PC-9 (cell line): ENCODE measurements at regions of chrX and their contacts with region 1.

Region 1: GRCh38 chrX:8632924-8633323 is 99.0 kb downstream of the ANOS1 start:
- DNase-seq: no peak
- H3K4me3 ChIP-seq: no peak overlapping the region
- H3K27ac ChIP-seq: no peak overlapping the region
- H3K4me1 ChIP-seq: peaks cover 14% of the 10 kb centered on the region
- H3K27me3 ChIP-seq: no peaks in the 10 kb centered on the region
- CTCF ChIP-seq: no peak

Region 2: GRCh38 chrX:7233580-7234406 is 1399.1 kb before region 1 on chrX:
- CTCF ChIA-PET with region 1: no interaction called
- POLR2A ChIA-PET with region 1: no interaction called
- intact Hi-C with region 1: no loop called
- DNase-seq: no peak
- H3K4me3 ChIP-seq: no peak overlapping the region
- H3K27ac ChIP-seq: no peak overlapping the region
- H3K4me1 ChIP-seq: 0 out of 2 replicates have a peak, but pooled peaks cover 11% of the 10 kb centered on the region
- H3K27me3 ChIP-seq: no peaks in the 10 kb centered on the region
- CTCF ChIP-seq: no peak

Region 3: DNA sequence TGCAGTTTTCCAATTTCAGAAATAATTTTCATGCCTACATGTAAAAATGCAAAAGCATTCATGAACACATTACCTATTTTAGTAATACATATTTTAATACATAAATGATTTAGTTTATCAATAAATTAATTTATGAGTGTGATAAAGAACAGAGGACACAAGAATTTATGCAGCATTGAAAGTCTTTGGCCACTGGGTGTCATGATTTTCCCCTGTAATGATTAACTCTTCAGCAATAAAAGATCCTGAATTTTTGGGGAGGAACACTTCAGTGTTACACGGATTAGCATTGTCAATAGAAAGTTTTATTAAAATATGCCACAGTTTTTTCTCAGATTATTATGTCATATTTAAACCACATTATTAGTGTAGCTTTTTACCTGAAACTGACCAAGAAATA is 453.3 kb before region 1 on chrX:
- CTCF ChIA-PET with region 1: no interaction called
- POLR2A ChIA-PET with region 1: no interaction called
- intact Hi-C with region 1: loop called (anchors 10 kb)
- DNase-seq: no peak
- H3K4me3 ChIP-seq: no peak overlapping the region
- H3K27ac ChIP-seq: no peak overlapping the region
- H3K4me1 ChIP-seq: no peaks in the 10 kb centered on the region
- H3K27me3 ChIP-seq: no peaks in the 10 kb centered on the region
- CTCF ChIP-seq: peak; percentile 61

Region 4: GRCh38 chrX:8721536-8721935 is 88.6 kb after region 1 on chrX:
- CTCF ChIA-PET with region 1: no interaction called
- POLR2A ChIA-PET with region 1: no interaction called
- intact Hi-C with region 1: no loop called
- DNase-seq: no peak
- H3K4me3 ChIP-seq: no peak overlapping the region
- H3K27ac ChIP-seq: no peak overlapping the region
- H3K4me1 ChIP-seq: peaks cover 9% of the 10 kb centered on the region
- H3K27me3 ChIP-seq: no peaks in the 10 kb centered on the region
- CTCF ChIP-seq: no peak

Region 5: GRCh38 chrX:8731559-8732395 is 98.9 kb after region 1 on chrX and contains the start of gene ANOS1:
- CTCF ChIA-PET with region 1: interaction called, 14 read pairs
- POLR2A ChIA-PET with region 1: no interaction called
- intact Hi-C with region 1: no loop called
- DNase-seq: no peak
- H3K4me3 ChIP-seq: no peak within 1 kb of the TSS
- H3K27ac ChIP-seq: no peak within 1 kb of the TSS
- H3K4me1 ChIP-seq: peaks cover 11% of the 10 kb centered on the region
- H3K27me3 ChIP-seq: no peaks in the 10 kb centered on the region
- CTCF ChIP-seq: no peak
- total RNA-seq, gene ANOS1: 0.22 and 0.90 TPM in 2 replicates